Activated CD4-positive, alpha-beta T cell treated with anti-CD3 and anti-CD28 coated beads for 36 hours (primary cell): ENCODE measurements at regions of chr21 and their contacts with region 1.

Region 1: GRCh38 chr21:14533504-14534428 is 12.3 kb downstream of the SAMSN1 start:
- DNase-seq: peak; percentile 21
- ATAC-seq: peak; percentile 78
- H3K4me3 Mint-ChIP-seq: peak overlapping the region; percentile 83
- H3K27ac Mint-ChIP-seq: peak overlapping the region; percentile 100
- H3K4me1 Mint-ChIP-seq: peaks cover 80% of the 10 kb centered on the region
- H3K27me3 Mint-ChIP-seq: no peaks in the 10 kb centered on the region

Region 2: DNA sequence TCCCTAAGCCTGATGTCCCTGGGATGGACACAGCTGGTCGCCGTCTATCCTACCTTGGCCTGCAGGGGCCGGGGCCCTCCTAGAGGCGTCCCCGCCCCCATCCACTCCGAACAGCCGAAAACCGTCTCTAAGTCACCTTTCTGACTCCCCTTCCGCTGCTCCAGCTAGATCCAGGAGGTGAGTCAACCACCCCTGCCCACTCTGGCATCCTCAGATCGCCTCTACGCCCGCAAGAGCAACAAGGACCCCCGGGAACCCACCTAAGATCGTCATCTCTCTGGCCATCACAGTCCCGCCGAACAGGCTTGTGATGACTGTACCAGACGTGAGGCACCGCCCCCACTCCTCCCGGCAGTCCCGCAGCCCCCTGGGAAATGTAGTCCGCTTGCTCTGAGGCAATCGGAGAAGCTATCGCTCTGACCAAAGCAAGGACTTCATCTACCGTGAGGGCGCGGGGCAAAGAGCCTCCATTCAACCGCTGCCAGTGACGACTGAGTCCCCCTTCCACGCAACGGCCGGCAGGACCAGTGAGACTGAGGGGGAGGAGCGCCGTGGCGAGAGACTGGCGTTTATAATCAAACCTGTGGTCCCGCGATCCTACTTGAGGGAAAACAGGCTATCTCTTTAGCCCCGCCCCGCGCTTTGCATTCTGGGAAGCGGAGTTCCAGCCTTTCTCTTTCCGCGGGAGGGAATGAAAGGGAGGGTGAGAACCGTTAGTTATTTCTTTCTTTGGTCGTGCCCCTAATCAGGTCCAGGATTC is 150.8 kb before region 1 on chr21 and contains the start of gene HSPA13:
- CTCF ChIA-PET with region 1: interaction called, 3 read pairs
- POLR2A ChIA-PET with region 1: no interaction called
- intact Hi-C with region 1: loop called (anchors 2 to 5 kb)
- DNase-seq: peak; percentile 99
- ATAC-seq: peak; percentile 97
- H3K4me3 Mint-ChIP-seq: peak within 1 kb of the TSS; percentile 90
- H3K27ac Mint-ChIP-seq: peak within 1 kb of the TSS; percentile 98
- H3K4me1 Mint-ChIP-seq: peaks cover 29% of the 10 kb centered on the region
- H3K27me3 Mint-ChIP-seq: no peaks in the 10 kb centered on the region
- total RNA-seq, gene HSPA13: 29.5 to 50.2 TPM

Region 3: DNA sequence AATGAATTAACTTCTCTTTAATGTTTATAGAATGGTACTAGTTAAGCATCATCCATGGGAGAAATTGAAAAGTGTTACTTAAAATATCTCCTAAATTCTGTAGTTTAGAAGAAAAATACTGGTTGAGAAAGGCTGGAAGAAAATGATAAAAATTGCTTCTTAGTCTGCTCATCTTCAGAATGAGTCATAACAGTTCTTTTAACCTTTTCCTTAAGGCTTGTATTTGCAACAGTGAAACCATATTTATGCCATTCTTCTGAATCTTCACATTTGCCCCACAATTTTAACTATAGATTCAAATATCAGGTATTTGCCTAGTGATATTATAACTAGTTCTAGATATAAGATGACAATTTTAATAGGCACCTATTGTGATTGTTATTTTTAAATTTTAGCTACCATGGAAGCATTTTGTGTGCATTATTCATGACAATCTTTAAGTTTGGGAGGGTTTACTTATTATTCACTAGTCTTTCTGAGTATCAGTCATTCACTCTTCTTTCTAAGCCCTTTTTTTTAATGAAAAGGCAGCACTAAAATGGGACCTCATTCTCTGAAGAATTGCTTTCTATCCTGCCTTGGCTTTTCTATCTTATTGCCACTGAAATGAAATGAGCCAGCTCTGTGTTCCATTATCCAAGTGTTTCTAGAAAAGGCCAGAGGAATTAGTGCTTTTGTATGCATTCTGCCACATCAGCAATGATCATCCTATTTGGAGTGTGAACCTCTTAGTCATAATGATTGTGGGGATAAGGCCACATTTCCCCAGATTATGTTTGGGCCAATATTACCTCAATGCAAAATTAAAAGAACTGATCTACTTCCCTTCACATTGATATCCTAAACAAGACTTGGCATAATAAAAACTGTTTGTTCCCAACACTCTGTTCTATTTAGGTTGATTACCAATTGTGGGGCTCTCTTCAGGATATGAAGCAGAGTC is 46.0 kb before region 1 on chr21:
- CTCF ChIA-PET with region 1: no interaction called
- POLR2A ChIA-PET with region 1: no interaction called
- intact Hi-C with region 1: loop called in 1 of 2 experiments (anchors 2 kb)
- DNase-seq: no peak
- ATAC-seq: peak; percentile 72
- H3K4me3 Mint-ChIP-seq: no peak overlapping the region
- H3K27ac Mint-ChIP-seq: peak overlapping the region; percentile 68
- H3K4me1 Mint-ChIP-seq: peaks cover 56% of the 10 kb centered on the region
- H3K27me3 Mint-ChIP-seq: no peaks in the 10 kb centered on the region

Region 4: GRCh38 chr21:14523234-14523633 is 10.5 kb before region 1 on chr21:
- CTCF ChIA-PET with region 1: interaction called, 10 read pairs
- POLR2A ChIA-PET with region 1: interaction called, 3 read pairs
- intact Hi-C with region 1: loop called (anchors 1 kb)
- DNase-seq: peak; percentile 64
- ATAC-seq: peak; percentile 79
- H3K4me3 Mint-ChIP-seq: peak overlapping the region; percentile 59
- H3K27ac Mint-ChIP-seq: peak overlapping the region; percentile 91
- H3K4me1 Mint-ChIP-seq: peaks cover 62% of the 10 kb centered on the region
- H3K27me3 Mint-ChIP-seq: no peaks in the 10 kb centered on the region

Region 5: GRCh38 chr21:14591882-14592281 is 58.1 kb after region 1 on chr21:
- CTCF ChIA-PET with region 1: no interaction called
- POLR2A ChIA-PET with region 1: no interaction called
- intact Hi-C with region 1: loop called in 1 of 2 experiments (anchors 5 kb)
- DNase-seq: no peak
- ATAC-seq: peak; percentile 40
- H3K4me3 Mint-ChIP-seq: no peak overlapping the region
- H3K27ac Mint-ChIP-seq: peak overlapping the region; percentile 32
- H3K4me1 Mint-ChIP-seq: peaks cover 26% of the 10 kb centered on the region
- H3K27me3 Mint-ChIP-seq: no peaks in the 10 kb centered on the region

Region 6: DNA sequence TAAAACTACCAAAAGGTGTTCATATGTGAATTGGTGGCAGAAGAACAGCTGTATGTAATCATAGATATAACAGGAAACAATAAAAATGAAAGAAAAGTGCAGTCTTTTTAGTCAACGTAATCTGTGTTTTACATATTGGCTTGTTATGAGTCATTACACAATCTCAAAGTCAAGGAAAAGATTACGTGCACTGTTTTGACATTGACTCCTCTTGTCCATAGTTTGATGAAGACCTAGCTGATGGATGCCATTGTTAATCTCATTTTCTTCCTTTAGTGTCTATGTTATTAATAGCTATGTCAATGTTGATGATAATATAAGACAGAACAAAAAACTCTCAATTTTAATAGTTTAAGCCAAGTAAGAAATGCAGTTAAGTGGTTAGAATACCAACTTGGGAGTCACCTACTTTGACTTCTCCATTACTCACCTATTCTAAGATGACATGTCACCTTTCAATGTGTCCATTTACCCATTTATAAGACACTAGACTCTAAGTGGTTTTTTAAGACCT is 96.8 kb after region 1 on chr21:
- CTCF ChIA-PET with region 1: no interaction called
- POLR2A ChIA-PET with region 1: no interaction called
- intact Hi-C with region 1: loop called in 1 of 2 experiments (anchors 5 kb)
- DNase-seq: no peak
- ATAC-seq: peak; percentile 90
- H3K4me3 Mint-ChIP-seq: peak overlapping the region; percentile 19
- H3K27ac Mint-ChIP-seq: peak overlapping the region; percentile 77
- H3K4me1 Mint-ChIP-seq: peaks cover 16% of the 10 kb centered on the region
- H3K27me3 Mint-ChIP-seq: no peaks in the 10 kb centered on the region

Region 7: DNA sequence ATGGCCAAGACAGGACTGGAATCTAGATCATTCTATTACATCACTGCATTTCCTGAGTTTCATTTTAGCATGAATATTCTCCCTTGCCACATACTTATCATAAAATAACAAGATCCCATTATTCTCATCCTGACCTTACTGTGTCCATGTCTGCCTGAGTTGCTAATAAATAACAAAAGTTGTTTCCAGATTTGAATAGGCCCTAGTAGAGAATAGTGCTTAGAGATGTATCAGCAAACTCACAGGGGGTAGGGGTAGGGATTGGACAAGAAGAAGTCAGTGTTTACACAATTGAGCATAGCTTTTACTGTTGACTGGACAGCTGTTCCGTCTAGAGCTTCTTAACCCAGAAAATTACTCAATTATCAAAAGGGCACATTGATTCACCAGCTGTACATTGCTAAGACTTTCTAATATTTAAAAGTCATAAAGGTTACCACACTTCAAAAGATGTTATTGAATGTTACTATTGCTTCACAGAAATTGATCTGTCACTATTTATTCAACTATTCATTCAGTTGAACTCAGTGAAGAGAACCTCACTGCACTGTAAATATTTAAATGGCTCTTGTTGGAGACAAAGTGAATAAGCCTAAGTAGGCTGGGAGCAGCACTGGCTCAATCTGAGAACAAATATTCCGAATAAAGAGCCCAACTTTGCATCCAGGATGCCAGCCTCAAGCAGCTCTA is 409.2 kb after region 1 on chr21:
- CTCF ChIA-PET with region 1: no interaction called
- POLR2A ChIA-PET with region 1: no interaction called
- intact Hi-C with region 1: no loop called
- DNase-seq: no peak
- ATAC-seq: no peak
- H3K4me3 Mint-ChIP-seq: no peak overlapping the region
- H3K27ac Mint-ChIP-seq: no peak overlapping the region
- H3K4me1 Mint-ChIP-seq: no peaks in the 10 kb centered on the region
- H3K27me3 Mint-ChIP-seq: no peaks in the 10 kb centered on the region

Region 8: DNA sequence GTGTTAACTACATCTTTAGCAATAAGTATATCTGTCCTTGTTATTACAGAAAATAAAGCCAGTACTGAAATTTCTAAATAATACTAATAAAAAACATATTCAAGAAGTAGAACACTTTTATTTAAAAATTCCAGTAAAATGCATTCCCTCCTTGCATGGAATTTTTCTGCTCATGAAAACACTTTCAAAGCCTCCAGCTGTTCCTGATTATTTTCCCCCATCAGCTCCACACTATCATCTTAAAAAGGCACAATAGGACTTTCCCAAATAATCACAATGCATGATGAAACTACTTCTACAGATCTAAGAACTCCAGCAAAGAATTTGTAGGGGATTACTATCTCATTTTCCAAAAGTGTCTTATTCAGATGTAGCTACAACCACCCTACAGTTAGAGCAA is 1033.4 kb after region 1 on chr21:
- CTCF ChIA-PET with region 1: no interaction called
- POLR2A ChIA-PET with region 1: no interaction called
- intact Hi-C with region 1: no loop called
- DNase-seq: no peak
- ATAC-seq: no peak
- H3K4me3 Mint-ChIP-seq: no peak overlapping the region
- H3K27ac Mint-ChIP-seq: no peak overlapping the region
- H3K4me1 Mint-ChIP-seq: no peaks in the 10 kb centered on the region
- H3K27me3 Mint-ChIP-seq: peaks cover 15% of the 10 kb centered on the region